Activated naive CD4-positive, alpha-beta T cell treated with anti-CD3 and anti-CD28 coated beads for 36 hours (primary cell): ENCODE measurements at regions of chr2 and their contacts with region 1.

Region 1: DNA sequence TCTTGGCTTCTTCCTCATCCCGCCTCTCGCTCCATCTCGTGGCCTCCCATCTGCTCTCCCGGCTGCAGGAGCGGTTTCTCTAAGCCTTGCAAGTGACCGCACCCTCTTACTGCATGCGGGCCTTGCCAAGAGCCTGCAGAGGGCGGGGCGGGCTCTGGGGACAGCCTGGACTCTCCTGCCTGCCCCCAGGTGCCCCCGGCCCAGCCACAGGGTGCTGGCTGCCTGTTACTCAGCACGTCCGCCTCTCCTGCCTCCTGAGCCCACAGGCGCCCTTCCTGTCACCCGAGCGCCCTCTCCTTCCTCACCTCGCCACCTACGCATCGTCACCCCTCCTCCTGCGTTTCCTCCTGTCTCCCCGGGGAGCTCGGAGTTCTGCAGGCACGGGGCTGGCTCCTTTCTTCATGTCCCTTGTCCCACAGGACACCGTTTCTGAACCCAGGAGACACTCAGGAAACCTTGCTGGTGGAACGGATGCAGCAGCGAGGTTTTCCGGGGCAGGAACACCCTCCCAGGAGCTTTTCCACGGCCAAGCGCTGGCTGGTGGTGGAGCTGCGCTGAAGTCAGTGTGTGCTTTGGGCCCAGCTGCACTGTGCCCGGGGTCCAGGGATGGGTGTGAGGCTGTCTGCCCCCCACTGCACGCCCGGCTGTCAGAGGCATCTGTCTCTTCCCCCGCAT is 28.5 kb downstream of the HPCAL1 start:
- DNase-seq: peak; percentile 92
- H3K4me3 Mint-ChIP-seq: peak overlapping the region; percentile 86
- H3K27ac Mint-ChIP-seq: peak overlapping the region; percentile 91
- H3K4me1 Mint-ChIP-seq: peaks cover 77% of the 10 kb centered on the region
- H3K27me3 Mint-ChIP-seq: no peaks in the 10 kb centered on the region

Region 2: GRCh38 chr2:10254373-10255151 is 76.6 kb before region 1 on chr2:
- CTCF ChIA-PET with region 1: no interaction called
- intact Hi-C with region 1: no loop called
- DNase-seq: no peak
- H3K4me3 Mint-ChIP-seq: no peak overlapping the region
- H3K27ac Mint-ChIP-seq: no peak overlapping the region
- H3K4me1 Mint-ChIP-seq: no peaks in the 10 kb centered on the region
- H3K27me3 Mint-ChIP-seq: no peaks in the 10 kb centered on the region

Region 3: DNA sequence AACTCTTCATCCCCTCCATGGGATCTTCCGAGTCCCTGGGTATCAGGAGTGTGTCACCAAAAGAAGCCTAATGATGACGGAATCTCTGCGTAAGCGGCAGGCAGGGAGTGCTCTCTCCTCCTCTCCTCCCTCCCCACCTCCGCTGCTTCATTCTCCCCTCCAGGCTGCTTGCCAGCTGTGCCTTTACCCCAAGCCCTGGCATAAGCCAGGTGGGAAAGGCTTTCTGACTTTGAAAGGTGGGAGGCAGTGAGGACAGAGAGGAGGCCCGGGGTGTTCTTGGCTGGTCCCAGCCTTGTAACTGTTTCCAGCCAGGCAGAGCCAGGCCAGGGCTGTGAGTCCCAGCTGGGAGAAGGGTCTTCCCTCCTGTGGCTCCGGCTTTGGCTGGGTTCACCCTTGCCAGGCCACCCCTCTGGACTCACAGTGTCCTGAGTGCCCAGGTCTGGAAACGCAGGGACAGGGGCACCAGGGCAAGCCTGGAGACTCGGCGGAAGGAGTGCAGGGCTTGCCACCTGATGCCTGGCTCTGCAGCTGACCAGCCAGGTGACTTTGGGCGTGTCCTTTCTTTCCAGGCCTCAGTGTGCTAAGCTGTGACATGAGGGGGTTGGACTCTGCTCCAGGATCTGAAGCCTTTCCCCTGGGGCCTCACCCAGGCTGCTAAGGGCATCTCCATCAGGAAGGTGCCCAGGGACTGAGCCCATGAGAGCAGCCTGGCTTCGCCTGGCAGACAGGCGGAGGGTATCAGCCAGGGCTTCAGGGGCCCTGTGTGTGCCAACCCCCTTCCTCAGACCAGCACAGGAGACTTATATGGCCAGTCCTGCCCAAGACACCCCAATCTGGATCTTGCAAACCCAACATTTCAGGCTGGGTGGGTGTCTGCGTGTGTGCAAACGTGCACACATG is 61.2 kb before region 1 on chr2:
- CTCF ChIA-PET with region 1: no interaction called
- intact Hi-C with region 1: loop called (anchors 1 kb)
- DNase-seq: no peak
- H3K4me3 Mint-ChIP-seq: no peak overlapping the region
- H3K27ac Mint-ChIP-seq: no peak overlapping the region
- H3K4me1 Mint-ChIP-seq: peaks cover 7% of the 10 kb centered on the region
- H3K27me3 Mint-ChIP-seq: no peaks in the 10 kb centered on the region

Region 4: DNA sequence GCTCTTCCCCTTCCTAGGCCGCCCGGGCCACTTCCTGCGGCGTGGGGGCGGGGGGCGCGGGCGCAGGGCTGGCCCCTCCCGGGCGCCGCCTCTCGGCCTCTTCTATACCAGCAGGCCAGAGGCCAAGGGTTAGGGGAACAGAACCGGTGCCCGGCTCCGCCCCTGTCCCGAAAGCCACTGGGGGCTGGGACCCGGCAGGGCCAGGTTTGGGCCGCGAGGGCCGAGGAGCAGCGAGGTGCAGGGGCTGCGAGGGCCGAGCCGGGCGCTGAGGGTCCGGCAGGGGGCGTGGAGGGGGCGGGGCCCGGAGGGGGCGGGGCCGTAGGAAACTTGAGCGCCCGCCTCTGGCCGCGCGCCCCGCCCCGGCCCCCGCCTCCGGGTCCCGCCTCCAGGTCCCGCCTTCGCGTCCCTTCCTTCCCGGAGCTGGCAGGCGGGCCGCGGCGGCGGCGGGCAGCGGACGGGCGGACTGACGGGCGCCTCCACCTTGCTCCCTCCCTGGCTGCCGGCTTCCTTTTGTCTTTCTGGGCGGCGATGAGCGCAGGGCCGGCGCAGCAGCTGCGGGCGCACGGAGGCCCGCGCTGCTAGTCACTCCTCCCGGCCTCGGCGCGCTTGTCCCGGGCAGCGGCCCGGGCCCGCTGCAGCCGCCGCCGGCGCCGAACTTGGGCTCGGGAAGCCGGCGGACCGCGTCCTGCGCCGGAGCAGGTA is 28.5 kb before region 1 on chr2 and contains the start of gene HPCAL1:
- CTCF ChIA-PET with region 1: interaction called, 119 read pairs
- intact Hi-C with region 1: loop called (anchors 1 kb)
- DNase-seq: peak; percentile 84
- H3K4me3 Mint-ChIP-seq: peak within 1 kb of the TSS; percentile 99
- H3K27ac Mint-ChIP-seq: peak within 1 kb of the TSS; percentile 83
- H3K4me1 Mint-ChIP-seq: peaks cover 71% of the 10 kb centered on the region
- H3K27me3 Mint-ChIP-seq: no peaks in the 10 kb centered on the region
- total RNA-seq, gene HPCAL1: 71.4 to 73.8 TPM

Region 5: DNA sequence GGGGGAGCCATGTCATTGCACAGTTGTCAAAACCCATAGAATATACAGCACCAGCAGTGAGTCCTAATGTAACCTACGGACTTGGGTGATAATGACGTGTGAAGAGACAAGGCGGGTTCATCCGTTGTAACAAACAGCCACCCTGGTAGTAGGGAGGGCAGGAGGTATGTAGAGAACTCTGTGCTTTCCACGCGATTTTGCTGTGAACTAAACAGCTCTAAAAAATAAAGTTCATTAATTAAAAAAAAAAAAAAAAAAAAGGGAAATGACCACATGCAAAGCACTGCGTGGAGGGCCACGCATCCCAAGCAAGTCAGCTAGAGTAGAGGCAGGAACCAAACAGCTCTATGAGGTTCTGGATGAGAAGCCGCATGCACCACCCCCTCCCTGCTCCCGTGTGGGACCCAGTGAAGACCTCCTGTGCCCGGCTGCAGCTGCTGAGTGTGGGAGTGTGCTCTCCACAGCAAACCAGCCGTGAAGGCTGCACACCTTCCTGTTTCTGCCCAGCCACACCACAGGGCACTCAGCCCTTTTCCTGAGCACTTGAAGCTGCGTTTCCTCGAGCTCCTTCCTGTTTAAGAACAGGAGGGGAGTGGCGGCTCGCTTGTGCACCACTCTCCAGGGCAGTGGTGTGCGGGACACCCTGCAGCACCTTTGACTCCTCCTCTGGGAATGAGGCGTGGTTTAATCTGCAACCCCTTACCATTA is 51.3 kb after region 1 on chr2:
- CTCF ChIA-PET with region 1: interaction called, 3 read pairs
- intact Hi-C with region 1: loop called (anchors 2 kb)
- DNase-seq: peak; percentile 61
- H3K4me3 Mint-ChIP-seq: peak overlapping the region; percentile 11
- H3K27ac Mint-ChIP-seq: no peak overlapping the region
- H3K4me1 Mint-ChIP-seq: peaks cover 93% of the 10 kb centered on the region
- H3K27me3 Mint-ChIP-seq: no peaks in the 10 kb centered on the region

Region 6: DNA sequence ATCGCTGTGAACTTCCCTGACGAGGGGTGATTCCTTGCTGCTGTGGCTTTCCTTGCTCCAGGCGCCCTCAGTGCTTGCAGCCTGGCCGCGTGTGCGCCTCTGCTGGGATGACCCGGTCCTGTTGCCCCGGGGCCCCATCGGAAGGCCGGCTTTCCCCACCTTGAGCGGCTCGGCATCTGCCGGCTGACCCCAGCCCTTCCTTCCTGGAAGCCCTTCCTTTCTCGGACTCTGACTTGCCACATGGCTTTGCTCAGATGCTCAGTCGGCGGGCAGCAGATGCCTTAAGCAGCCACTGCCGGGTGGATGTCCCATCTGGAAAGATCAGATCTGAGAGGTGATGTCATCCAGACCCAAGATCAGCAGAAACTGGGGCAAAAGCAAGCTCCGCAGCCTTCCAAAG is 217.5 kb after region 1 on chr2:
- CTCF ChIA-PET with region 1: no interaction called
- intact Hi-C with region 1: no loop called
- DNase-seq: no peak
- H3K4me3 Mint-ChIP-seq: no peak overlapping the region
- H3K27ac Mint-ChIP-seq: no peak overlapping the region
- H3K4me1 Mint-ChIP-seq: peaks cover 11% of the 10 kb centered on the region
- H3K27me3 Mint-ChIP-seq: peaks cover 29% of the 10 kb centered on the region

Region 7: DNA sequence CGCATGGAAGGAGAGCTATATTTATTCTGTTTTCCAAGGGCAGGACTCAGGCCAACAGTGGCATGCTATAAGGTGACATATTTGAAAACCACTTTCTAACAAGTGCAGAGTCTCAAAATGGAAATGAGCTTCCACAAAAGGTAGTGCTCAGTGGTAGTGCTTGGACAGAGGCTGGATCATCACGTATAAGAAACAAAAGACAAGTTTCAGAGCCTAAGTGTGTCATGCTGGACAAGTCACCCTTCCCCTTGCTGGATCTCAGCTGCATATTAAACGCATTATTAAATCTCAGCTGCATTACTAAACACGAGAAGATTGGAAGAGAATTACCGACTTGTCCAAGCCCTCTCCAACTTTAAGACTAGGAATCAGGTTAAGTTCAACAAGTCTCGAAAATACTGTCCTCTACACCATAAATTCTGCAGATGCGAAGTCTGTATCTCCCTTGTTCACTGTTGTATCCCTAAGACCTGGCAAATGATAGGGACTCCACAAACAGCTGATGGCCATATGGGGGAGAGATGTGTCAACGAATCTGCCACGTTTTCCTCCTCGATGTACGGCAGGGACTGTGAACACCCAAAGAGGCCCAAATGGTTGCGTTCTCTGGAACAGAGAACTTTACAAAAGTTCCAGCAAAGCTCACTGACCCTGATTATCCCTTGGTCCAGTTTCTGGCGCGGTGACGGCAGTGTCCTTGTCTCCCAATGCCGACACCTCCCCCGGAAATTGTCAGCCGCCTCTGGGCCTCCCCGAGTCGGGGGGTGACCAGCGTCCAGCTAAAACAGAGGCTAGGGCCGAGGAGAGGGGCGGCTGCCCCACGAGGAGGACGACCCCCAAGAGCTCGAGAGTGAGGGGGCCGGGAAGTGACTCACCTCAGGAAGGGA is 358.0 kb after region 1 on chr2:
- CTCF ChIA-PET with region 1: no interaction called
- intact Hi-C with region 1: loop called (anchors 5 kb)
- DNase-seq: peak; percentile 28
- H3K4me3 Mint-ChIP-seq: no peak overlapping the region
- H3K27ac Mint-ChIP-seq: no peak overlapping the region
- H3K4me1 Mint-ChIP-seq: peaks cover 8% of the 10 kb centered on the region
- H3K27me3 Mint-ChIP-seq: no peaks in the 10 kb centered on the region